ENCODE measurements at regions of chr2 and their contacts with region 1.

Region 1: GRCh38 chr2:159035790-159036411 is 67.5 kb downstream of the TANC1 start:
- DNase-seq: peak; percentile 24 to 51 (median 34)
- ATAC-seq: peak; percentile 90
- H3K4me3 ChIP-seq: no peak overlapping the region
- H3K27ac ChIP-seq: no peak overlapping the region
- H3K4me1 ChIP-seq: peaks cover 4 to 5% of the 10 kb centered on the region in 2 experiments; a peak in 4 of 5 replicates
- H3K27me3 ChIP-seq: peaks cover 8 to 17% of the 10 kb centered on the region in 2 experiments; a peak in 4 of 5 replicates
- CTCF ChIP-seq: peak; percentile 50 to 71 (median 60)
- EP300 ChIP-seq: no peak
- POLR2A ChIP-seq: no peak
- RAD21 ChIP-seq: peak; percentile 71 to 85

Region 2: GRCh38 chr2:158998551-158999248 is 37.2 kb before region 1 on chr2:
- CTCF ChIA-PET with region 1: no interaction called
- POLR2A ChIA-PET with region 1: no interaction called
- in situ Hi-C with region 1: no loop called
- intact Hi-C with region 1: no loop called
- DNase-seq: no peak
- ATAC-seq: no peak
- H3K4me3 ChIP-seq: no peak overlapping the region
- H3K27ac ChIP-seq: no peak overlapping the region
- H3K4me1 ChIP-seq: no peaks in the 10 kb centered on the region
- H3K27me3 ChIP-seq: peaks cover 20 to 35% of the 10 kb centered on the region in 2 experiments; a peak in 3 of 5 replicates
- CTCF ChIP-seq: no peak
- EP300 ChIP-seq: no peak
- POLR2A ChIP-seq: no peak
- RAD21 ChIP-seq: no peak

Region 3: GRCh38 chr2:159118115-159118858 is 82.4 kb after region 1 on chr2:
- CTCF ChIA-PET with region 1: interaction called, 33 read pairs
- POLR2A ChIA-PET with region 1: interaction called, 3 read pairs
- in situ Hi-C with region 1: no loop called
- intact Hi-C with region 1: loop called (anchors 1 kb)
- DNase-seq: peak; percentile 67 to 89 (median 76)
- ATAC-seq: peak; percentile 97
- H3K4me3 ChIP-seq: no peak overlapping the region
- H3K27ac ChIP-seq: no peak overlapping the region
- H3K4me1 ChIP-seq: peaks cover 5 to 9% of the 10 kb centered on the region in 2 experiments; a peak in 4 of 5 replicates
- H3K27me3 ChIP-seq: peaks cover 3 to 6% of the 10 kb centered on the region in 2 experiments; a peak in 4 of 5 replicates
- CTCF ChIP-seq: peak; percentile 85 to 94 (median 94)
- EP300 ChIP-seq: no peak
- POLR2A ChIP-seq: no peak
- RAD21 ChIP-seq: peak; percentile 96 to 98

Region 4: DNA sequence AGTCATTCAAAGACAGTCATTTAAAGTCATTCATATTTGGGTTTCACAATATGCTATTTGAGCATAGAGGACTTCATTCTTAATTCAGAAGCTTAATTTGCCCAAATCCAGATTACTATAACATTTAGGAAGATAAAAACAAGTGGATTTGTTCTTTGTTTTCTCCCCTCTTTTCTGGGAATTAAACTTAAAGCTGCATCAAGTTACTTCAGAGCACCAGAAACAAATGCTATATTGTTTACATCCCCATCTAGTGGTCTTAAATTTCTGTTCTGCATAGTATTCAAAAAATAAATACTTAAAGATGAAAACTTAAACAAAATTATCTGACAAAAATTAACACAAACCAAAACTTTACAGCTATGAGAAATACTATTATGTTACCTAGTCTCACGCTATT is 641.8 kb after region 1 on chr2:
- CTCF ChIA-PET with region 1: no interaction called
- POLR2A ChIA-PET with region 1: no interaction called
- in situ Hi-C with region 1: no loop called
- intact Hi-C with region 1: no loop called
- DNase-seq: no peak
- ATAC-seq: no peak
- H3K4me3 ChIP-seq: no peak overlapping the region
- H3K27ac ChIP-seq: no peak overlapping the region
- H3K4me1 ChIP-seq: no peaks in the 10 kb centered on the region
- H3K27me3 ChIP-seq: no peaks in the 10 kb centered on the region
- CTCF ChIP-seq: peak in 1 of 3 experiments; percentile 61; a peak in 2 of 6 replicates
- EP300 ChIP-seq: no peak
- POLR2A ChIP-seq: no peak
- RAD21 ChIP-seq: peak; percentile 52 to 63